ENCODE measurements at regions of chr10 and their contacts with region 1.

Region 1: GRCh38 chr10:17643755-17644484 is at the start of gene STAM:
- DNase-seq: peak; percentile 69 to 91
- H3K4me3 ChIP-seq: peak within 1 kb of the TSS; percentile 86 to 98 (median 96)
- H3K27ac ChIP-seq: peak within 1 kb of the TSS; percentile 99
- H3K4me1 ChIP-seq: peaks cover 0 to 5% (median 1%) of the 10 kb centered on the region in 4 experiments; a peak in 4 of 7 replicates
- H3K27me3 ChIP-seq: no peaks in the 10 kb centered on the region
- CTCF ChIP-seq: no peak
- EP300 ChIP-seq: peak in 1 of 2 experiments; percentile 15; a peak in 1 of 3 replicates
- POLR2A ChIP-seq: peak; percentile 83 to 91
- RAD21 ChIP-seq: no peak
- total RNA-seq, gene STAM: 27.8 and 29.7 TPM in 2 replicates

Region 2: DNA sequence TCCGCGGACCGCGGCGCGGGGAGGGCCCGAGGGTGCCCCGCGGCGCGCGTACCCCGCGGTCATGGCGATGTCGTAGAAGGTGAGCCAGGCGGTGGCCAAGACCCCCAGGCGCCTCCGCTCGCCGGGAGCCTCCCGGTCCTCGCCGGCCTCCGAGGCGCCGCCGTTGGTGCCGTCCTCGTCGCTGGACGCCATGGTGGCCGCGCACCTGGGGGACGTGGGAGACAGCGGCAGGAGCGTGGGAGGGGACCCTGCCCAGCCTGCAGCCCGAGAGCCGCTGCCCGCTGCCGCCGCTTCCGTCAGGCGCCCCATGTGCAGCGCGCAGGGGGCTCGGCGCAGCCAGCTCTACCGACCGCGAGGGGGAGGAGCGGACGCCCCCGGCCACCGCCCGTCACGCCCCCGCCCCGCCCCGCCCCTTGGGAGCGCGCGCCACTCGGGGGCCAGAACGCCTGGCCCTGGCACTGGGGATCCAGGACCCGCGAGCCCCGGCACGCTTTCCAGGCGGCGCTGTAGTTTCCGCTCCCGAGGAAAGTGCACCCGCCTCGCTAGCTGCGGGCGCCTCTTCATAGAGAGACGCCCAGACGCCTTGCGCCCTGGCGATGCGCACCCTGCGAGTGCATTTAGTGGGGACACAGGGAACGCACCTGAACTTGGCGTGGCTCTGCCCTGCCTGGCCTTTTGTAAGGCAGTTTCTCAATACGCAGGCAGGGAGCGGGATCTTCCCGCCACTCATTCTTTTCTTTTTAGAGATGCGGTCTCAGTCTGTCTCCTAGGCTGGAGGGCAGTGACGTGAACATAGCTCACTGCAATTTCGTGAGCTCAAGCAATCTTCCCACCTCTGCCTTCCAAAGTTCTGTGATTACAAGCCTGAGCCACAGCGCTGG is 26.6 kb before region 1 on chr10 and contains the start of gene HACD1:
- CTCF ChIA-PET with region 1: interaction called, 3 read pairs
- POLR2A ChIA-PET with region 1: interaction called, 25 read pairs
- DNase-seq: peak; percentile 50 to 84
- H3K4me3 ChIP-seq: peak within 1 kb of the TSS; percentile 63 to 89 (median 76)
- H3K27ac ChIP-seq: peak within 1 kb of the TSS; percentile 70; the same call in 1 of the 2 replicates
- H3K4me1 ChIP-seq: no peaks in the 10 kb centered on the region
- H3K27me3 ChIP-seq: no peaks in the 10 kb centered on the region
- CTCF ChIP-seq: peak in 1 of 3 experiments; percentile 1; a peak in 1 of 4 replicates
- EP300 ChIP-seq: no peak
- POLR2A ChIP-seq: peak in 1 of 2 experiments; percentile 67; a peak in 2 of 3 replicates
- RAD21 ChIP-seq: peak in 1 of 2 experiments; percentile 17; a peak in 1 of 4 replicates
- total RNA-seq, gene HACD1: 30.8 and 32.6 TPM in 2 replicates

Region 3: GRCh38 chr10:17657103-17657500 is 13.2 kb after region 1 on chr10:
- CTCF ChIA-PET with region 1: interaction called, 7 read pairs
- POLR2A ChIA-PET with region 1: interaction called, 16 read pairs
- DNase-seq: no peak
- H3K4me3 ChIP-seq: no peak overlapping the region
- H3K27ac ChIP-seq: no peak overlapping the region
- H3K4me1 ChIP-seq: peaks cover 0 to 7% (median 0%) of the 10 kb centered on the region in 4 experiments; a peak in 1 of 7 replicates
- H3K27me3 ChIP-seq: no peaks in the 10 kb centered on the region
- CTCF ChIP-seq: no peak
- EP300 ChIP-seq: no peak
- POLR2A ChIP-seq: no peak
- RAD21 ChIP-seq: no peak

Region 4: GRCh38 chr10:17673456-17674061 is 29.6 kb after region 1 on chr10:
- CTCF ChIA-PET with region 1: interaction called, 5 read pairs
- POLR2A ChIA-PET with region 1: interaction called, 29 read pairs
- DNase-seq: no peak
- H3K4me3 ChIP-seq: no peak overlapping the region
- H3K27ac ChIP-seq: no peak overlapping the region
- H3K4me1 ChIP-seq: peaks cover 0 to 32% (median 15%) of the 10 kb centered on the region in 4 experiments; a peak in 6 of 7 replicates
- H3K27me3 ChIP-seq: no peaks in the 10 kb centered on the region
- CTCF ChIP-seq: no peak
- EP300 ChIP-seq: no peak
- POLR2A ChIP-seq: no peak
- RAD21 ChIP-seq: no peak

Measured in H1 (cell line).